ENCODE measurements at regions of chr1 and their contacts with region 1.

Region 1: DNA sequence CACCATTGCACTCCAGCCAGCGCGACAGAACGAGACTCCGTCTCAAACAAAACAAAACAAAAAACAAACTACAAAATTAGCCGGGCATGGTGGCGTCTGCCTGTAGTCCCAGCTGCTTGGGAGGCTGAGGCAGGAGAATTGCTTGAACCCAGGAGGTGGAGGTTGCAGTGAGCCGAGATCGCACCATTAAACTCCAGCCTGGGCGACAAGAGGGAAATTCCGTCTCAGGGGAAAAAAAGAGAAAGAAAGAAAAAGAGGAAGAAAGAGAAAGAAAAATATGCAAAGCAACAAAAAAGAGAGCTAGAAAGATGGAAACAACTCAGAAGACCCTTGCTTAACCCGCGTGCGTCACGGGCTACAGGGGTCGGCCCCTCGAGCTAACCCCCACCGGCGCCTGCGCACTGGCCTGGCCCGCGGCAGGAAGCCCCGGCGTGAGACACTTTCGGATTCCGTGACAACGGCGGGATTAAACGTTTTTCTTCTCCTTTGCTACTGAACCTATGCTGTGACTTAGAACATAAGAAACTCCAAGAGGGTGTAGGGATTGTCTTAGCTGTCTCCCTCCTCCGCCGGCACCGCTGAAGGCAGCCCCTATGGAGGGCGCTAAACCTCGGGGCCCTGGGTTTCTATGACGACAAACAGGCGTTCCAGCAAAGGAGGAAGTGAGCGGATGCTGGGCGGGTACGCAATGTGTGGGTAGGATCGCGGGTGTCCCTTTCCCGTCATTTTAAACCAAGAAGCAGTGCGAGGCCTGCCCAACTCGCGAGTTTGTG is at the start of gene AXDND1:
- DNase-seq: peak; percentile 93
- H3K4me3 ChIP-seq: peak within 1 kb of the TSS; percentile 56 to 69 (median 64)
- H3K27ac ChIP-seq: peak within 1 kb of the TSS; percentile 85 to 87 (median 86)
- H3K4me1 ChIP-seq: peaks cover 0 to 11% (median 4%) of the 10 kb centered on the region in 4 donors
- H3K27me3 ChIP-seq: no peaks in the 10 kb centered on the region
- CTCF ChIP-seq: no peak
- EP300 ChIP-seq: no peak
- POLR2A ChIP-seq: peak in 1 of 2 donors; percentile 16
- total RNA-seq, gene AXDND1: 0.14 to 2.5 (median 0.36) TPM in 3 of 4 donors, not detected in the other

Region 2: GRCh38 chr1:178532392-178532791 is 833.1 kb before region 1 on chr1:
- intact Hi-C with region 1: loop called (anchors 10 kb)
- DNase-seq: peak; percentile 86
- H3K4me3 ChIP-seq: no peak overlapping the region
- H3K27ac ChIP-seq: no peak overlapping the region
- H3K4me1 ChIP-seq: peaks cover 0 to 18% (median 16%) of the 10 kb centered on the region in 4 donors
- H3K27me3 ChIP-seq: no peaks in the 10 kb centered on the region
- CTCF ChIP-seq: peak; percentile 68 to 87 (median 78)
- EP300 ChIP-seq: no peak
- POLR2A ChIP-seq: no peak

Region 3: GRCh38 chr1:178774263-178774662 is 591.2 kb before region 1 on chr1:
- intact Hi-C with region 1: loop called (anchors 10 kb)
- DNase-seq: no peak
- H3K4me3 ChIP-seq: no peak overlapping the region
- H3K27ac ChIP-seq: no peak overlapping the region
- H3K4me1 ChIP-seq: no peaks in the 10 kb centered on the region
- H3K27me3 ChIP-seq: no peaks in the 10 kb centered on the region
- CTCF ChIP-seq: peak in 2 of 4 experiments; percentile 32 to 34
- EP300 ChIP-seq: no peak
- POLR2A ChIP-seq: no peak

Region 4: GRCh38 chr1:179081687-179082332 is 283.7 kb before region 1 on chr1 and contains the start of gene TOR3A:
- intact Hi-C with region 1: loop called (anchors 2 kb)
- DNase-seq: peak; percentile 97
- H3K4me3 ChIP-seq: peak within 1 kb of the TSS; percentile 64 to 94 (median 86)
- H3K27ac ChIP-seq: peak within 1 kb of the TSS; percentile 84 to 92 (median 91)
- H3K4me1 ChIP-seq: peaks cover 0 to 24% (median 20%) of the 10 kb centered on the region in 4 donors
- H3K27me3 ChIP-seq: no peaks in the 10 kb centered on the region
- CTCF ChIP-seq: no peak
- EP300 ChIP-seq: no peak
- POLR2A ChIP-seq: peak; percentile 53 to 74
- total RNA-seq, gene TOR3A: 38.8 to 53.5 (median 39.9) TPM

Region 5: GRCh38 chr1:179121159-179121938 is 244.2 kb before region 1 on chr1:
- intact Hi-C with region 1: loop called (anchors 1 kb)
- DNase-seq: no peak
- H3K4me3 ChIP-seq: no peak overlapping the region
- H3K27ac ChIP-seq: no peak overlapping the region
- H3K4me1 ChIP-seq: peaks cover 0 to under 1% (median 0%) of the 10 kb centered on the region in 4 donors
- H3K27me3 ChIP-seq: no peaks in the 10 kb centered on the region
- CTCF ChIP-seq: peak; percentile 11 to 50 (median 40)
- EP300 ChIP-seq: no peak
- POLR2A ChIP-seq: no peak

Region 6: GRCh38 chr1:179229214-179230140 is 136.0 kb before region 1 on chr1 and contains the start of gene ABL2:
- intact Hi-C with region 1: loop called (anchors 10 kb)
- DNase-seq: peak; percentile 69
- H3K4me3 ChIP-seq: peak within 1 kb of the TSS; percentile 85 to 98 (median 98)
- H3K27ac ChIP-seq: peak within 1 kb of the TSS; percentile 88 to 93 (median 88)
- H3K4me1 ChIP-seq: peaks cover 0 to 24% (median 14%) of the 10 kb centered on the region in 4 donors
- H3K27me3 ChIP-seq: no peaks in the 10 kb centered on the region
- CTCF ChIP-seq: no peak
- EP300 ChIP-seq: no peak
- POLR2A ChIP-seq: no peak
- total RNA-seq, gene ABL2: 10.3 to 32.6 (median 15.0) TPM

Region 7: DNA sequence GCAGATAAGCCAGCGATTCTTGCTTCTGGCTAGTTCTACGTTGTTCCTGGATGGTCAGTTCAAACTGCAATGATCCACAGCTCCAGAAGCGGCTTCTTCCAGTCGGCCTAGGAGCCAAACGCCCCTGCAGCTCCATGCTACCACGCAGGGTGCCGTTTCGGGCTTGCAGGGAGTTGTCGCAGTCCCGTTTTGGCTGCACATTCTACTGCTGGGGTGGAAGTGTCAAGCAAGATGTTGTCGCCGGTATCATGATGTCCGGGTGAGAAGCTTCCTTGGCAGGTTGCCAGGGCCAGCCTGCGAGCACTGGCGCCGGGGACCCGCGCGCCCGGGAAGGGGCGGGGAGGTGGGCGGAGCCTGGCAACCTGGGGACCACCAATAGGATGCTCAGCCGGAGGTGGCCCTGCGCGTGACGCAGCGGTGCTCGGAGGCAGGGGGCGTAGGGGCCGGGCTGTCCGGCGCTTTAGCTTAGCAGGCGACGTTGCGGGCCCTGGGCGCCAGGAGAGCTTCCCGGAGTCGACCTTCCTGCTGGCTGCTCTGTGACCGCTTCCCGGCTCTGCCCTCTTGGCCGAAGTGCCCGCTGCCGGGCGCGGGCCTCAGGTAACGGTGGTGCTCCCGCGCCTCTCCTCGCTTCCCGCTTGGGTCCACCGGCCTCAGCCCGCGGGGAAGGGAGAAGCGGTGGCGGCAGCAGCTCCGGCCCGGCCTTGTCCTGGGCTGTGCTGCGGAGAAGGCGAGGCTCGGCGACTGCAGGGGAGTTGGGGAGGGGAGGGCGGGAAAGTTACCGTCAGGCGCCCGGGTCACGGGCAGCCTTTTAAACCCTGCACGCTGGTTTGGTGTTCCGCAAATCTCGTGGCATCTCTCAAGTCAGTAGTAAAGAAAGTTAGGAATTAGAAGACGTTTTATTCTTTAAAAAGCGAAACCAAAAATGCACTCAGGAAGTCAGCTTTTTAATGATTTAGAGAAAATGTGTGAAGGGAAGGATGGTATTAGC is 71.9 kb before region 1 on chr1 and contains the start of gene SOAT1:
- intact Hi-C with region 1: loop called (anchors 2 kb)
- DNase-seq: peak; percentile 97
- H3K4me3 ChIP-seq: peak within 1 kb of the TSS; percentile 72 to 92 (median 80)
- H3K27ac ChIP-seq: peak within 1 kb of the TSS; percentile 89 to 95 (median 94)
- H3K4me1 ChIP-seq: peaks cover 0 to 33% (median 21%) of the 10 kb centered on the region in 4 donors
- H3K27me3 ChIP-seq: no peaks in the 10 kb centered on the region
- CTCF ChIP-seq: no peak
- EP300 ChIP-seq: no peak
- POLR2A ChIP-seq: peak; percentile 63 to 81
- total RNA-seq, gene SOAT1: 13.2 to 14.7 (median 14.1) TPM

Region 8: GRCh38 chr1:179612361-179612760 is 246.9 kb after region 1 on chr1:
- intact Hi-C with region 1: no loop called
- DNase-seq: no peak
- H3K4me3 ChIP-seq: no peak overlapping the region
- H3K27ac ChIP-seq: no peak overlapping the region
- H3K4me1 ChIP-seq: no peaks in the 10 kb centered on the region
- H3K27me3 ChIP-seq: no peaks in the 10 kb centered on the region
- CTCF ChIP-seq: no peak
- EP300 ChIP-seq: no peak
- POLR2A ChIP-seq: no peak

Measured in sigmoid colon (tissue), 7 donors.